Common myeloid progenitor, CD34-positive (primary cell): ENCODE measurements at regions of chr18 and their contacts with region 1.

Region 1: DNA sequence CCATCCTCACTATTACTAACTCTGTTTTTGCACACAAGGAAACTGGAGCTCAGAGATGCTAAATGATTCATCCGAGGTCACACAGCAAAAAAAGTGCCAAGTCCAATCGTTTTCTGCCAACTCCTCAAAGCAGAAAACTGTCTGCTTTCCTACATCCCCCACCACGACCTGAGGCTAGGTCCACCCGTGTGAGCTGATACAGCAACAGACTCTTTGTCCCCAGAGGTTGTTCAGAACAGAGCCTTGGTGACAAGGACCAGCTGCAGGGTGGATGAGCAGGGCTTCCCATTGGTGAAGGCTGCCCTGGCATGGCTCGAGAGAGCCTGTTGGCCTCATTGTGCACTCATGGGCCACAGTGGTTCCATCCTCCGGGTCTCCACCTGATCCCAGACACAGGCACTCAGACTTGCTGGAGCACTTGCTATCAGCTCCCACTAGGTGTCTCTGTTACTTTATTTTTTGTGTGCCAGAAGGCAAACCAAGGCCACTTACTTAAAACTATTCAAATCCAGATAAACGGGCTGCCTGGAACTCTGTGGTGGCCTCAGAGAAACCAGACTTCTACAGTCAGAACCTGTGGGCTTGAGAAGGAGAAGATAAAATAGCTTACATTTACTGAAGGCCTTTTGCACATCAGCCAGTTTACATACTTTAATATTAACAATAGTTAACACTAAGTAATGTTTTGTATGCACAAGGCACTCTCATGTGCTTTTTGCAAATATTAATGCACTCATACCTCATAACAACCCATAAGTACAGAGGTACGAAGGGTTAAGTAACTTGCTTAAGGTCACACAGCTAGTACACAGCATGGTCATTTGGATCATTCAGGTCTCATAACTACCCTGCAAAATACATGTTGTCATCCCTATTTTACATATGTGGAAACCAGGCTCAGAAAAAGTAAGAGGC is 62.9 kb upstream of the CTIF start:
- DNase-seq: peak; percentile 74 to 87 (median 84)
- H3K4me3 ChIP-seq: no peak overlapping the region
- H3K27ac ChIP-seq: no peak overlapping the region
- H3K4me1 ChIP-seq: no peaks in the 10 kb centered on the region
- H3K27me3 ChIP-seq: peaks cover 0 to 13% (median 2%) of the 10 kb centered on the region in 5 experiments

Region 2: GRCh38 chr18:48486754-48487153 is 10.9 kb after region 1 on chr18:
- CTCF ChIA-PET with region 1: interaction called, 10 read pairs
- POLR2A ChIA-PET with region 1: no interaction called
- DNase-seq: no peak
- H3K4me3 ChIP-seq: no peak overlapping the region
- H3K27ac ChIP-seq: no peak overlapping the region
- H3K4me1 ChIP-seq: no peaks in the 10 kb centered on the region
- H3K27me3 ChIP-seq: peaks cover 0 to under 1% (median 0%) of the 10 kb centered on the region in 5 experiments

Region 3: GRCh38 chr18:48529796-48530195 is 53.9 kb after region 1 on chr18:
- CTCF ChIA-PET with region 1: no interaction called
- POLR2A ChIA-PET with region 1: no interaction called
- DNase-seq: no peak
- H3K4me3 ChIP-seq: no peak overlapping the region
- H3K27ac ChIP-seq: no peak overlapping the region
- H3K4me1 ChIP-seq: peaks cover 0 to 11% (median 5%) of the 10 kb centered on the region in 4 experiments
- H3K27me3 ChIP-seq: peaks cover 0 to 11% (median 4%) of the 10 kb centered on the region in 5 experiments

Region 4: GRCh38 chr18:48663931-48664847 is 188.3 kb after region 1 on chr18:
- CTCF ChIA-PET with region 1: interaction called, 13 read pairs
- POLR2A ChIA-PET with region 1: no interaction called
- DNase-seq: peak; percentile 25 to 43 (median 38)
- H3K4me3 ChIP-seq: no peak overlapping the region
- H3K27ac ChIP-seq: no peak overlapping the region
- H3K4me1 ChIP-seq: peaks cover 0 to 15% (median 7%) of the 10 kb centered on the region in 4 experiments
- H3K27me3 ChIP-seq: no peaks in the 10 kb centered on the region